Pancreas (tissue), 10 donors: ENCODE measurements at regions of chr18 and their contacts with region 1.

Region 1: GRCh38 chr18:12049978-12050811 is 43.4 kb upstream of the ANKRD62 start:
- DNase-seq: no peak
- ATAC-seq: peak in 1 of 4 donors; percentile 29
- H3K4me3 ChIP-seq: no peak overlapping the region
- H3K27ac ChIP-seq: no peak overlapping the region
- H3K4me1 ChIP-seq: peaks cover 0 to 4% (median 0%) of the 10 kb centered on the region in 3 donors
- H3K27me3 ChIP-seq: no peaks in the 10 kb centered on the region
- CTCF ChIP-seq: no peak

Region 2: GRCh38 chr18:11925800-11926481 is 124.3 kb before region 1 on chr18:
- intact Hi-C with region 1: loop called in 1 of 3 experiments (anchors 10 kb)
- DNase-seq: no peak
- ATAC-seq: no peak
- H3K4me3 ChIP-seq: no peak overlapping the region
- H3K27ac ChIP-seq: no peak overlapping the region
- H3K4me1 ChIP-seq: no peaks in the 10 kb centered on the region
- H3K27me3 ChIP-seq: no peaks in the 10 kb centered on the region
- CTCF ChIP-seq: no peak